ENCODE measurements at regions of chr15 and their contacts with region 1.

Region 1: DNA sequence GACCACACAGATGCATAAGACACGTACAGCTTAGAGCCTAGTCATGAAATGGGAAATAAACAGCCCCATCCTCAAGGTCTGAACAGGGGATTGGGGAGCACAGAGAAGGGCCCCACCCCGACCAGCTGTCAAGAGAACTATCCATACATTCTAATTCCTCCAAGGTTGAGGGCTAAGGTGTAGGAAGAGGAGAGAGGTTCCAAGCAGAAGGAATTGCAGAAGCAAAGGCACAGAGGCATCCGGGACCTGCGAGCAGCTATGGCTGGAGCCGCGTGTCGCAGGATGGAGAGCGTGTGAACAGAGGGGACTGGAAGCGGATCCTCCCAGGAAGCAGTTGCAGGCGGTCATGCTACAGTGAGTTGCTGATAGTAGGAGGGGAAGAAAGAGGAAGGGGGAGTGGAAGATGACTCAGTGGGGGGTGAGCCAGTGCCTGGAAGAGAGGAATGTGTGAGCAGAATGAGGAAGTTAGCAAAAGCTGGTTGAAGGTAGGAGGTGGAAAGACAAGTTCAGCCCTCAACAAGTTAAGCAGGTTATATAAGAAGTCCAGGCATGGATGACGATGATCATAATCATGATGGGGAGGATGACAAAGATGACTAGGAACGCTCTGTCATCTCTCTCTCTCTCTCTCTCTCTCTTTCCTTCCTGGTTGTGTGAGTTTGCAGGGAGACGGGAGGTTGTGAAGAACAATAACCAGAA is 89.7 kb downstream of the LIPC start:
- DNase-seq: peak in 8 of 10 donors; percentile 41 to 80 (median 64)
- H3K4me3 ChIP-seq: no peak overlapping the region
- H3K27ac ChIP-seq: peak overlapping the region; percentile 6 to 92 (median 84)
- H3K27me3 ChIP-seq: no peaks in the 10 kb centered on the region
- CTCF ChIP-seq: no peak

Region 2: GRCh38 chr15:58331903-58332675 is 189.4 kb before region 1 on chr15:
- intact Hi-C with region 1: loop called in 1 of 2 experiments (anchors 5 kb)
- DNase-seq: peak; percentile 48 to 95 (median 88)
- H3K4me3 ChIP-seq: peak overlapping the region in 35 of 59 donors; percentile 0 to 42 (median 18)
- H3K27ac ChIP-seq: peak overlapping the region; percentile 63 to 96 (median 90)
- H3K27me3 ChIP-seq: no peaks in the 10 kb centered on the region
- CTCF ChIP-seq: peak in 5 of 56 donors; percentile 11 to 29 (median 18)

Region 3: GRCh38 chr15:58407376-58407775 is 114.1 kb before region 1 on chr15:
- intact Hi-C with region 1: loop called in 1 of 2 experiments (anchors 5 kb)
- DNase-seq: peak in 5 of 10 donors; percentile 16 to 74 (median 47)
- H3K4me3 ChIP-seq: peak overlapping the region in 2 of 59 donors; percentile 3 to 11
- H3K27ac ChIP-seq: peak overlapping the region in 39 of 59 donors; percentile 2 to 80 (median 53)
- H3K27me3 ChIP-seq: no peaks in the 10 kb centered on the region
- CTCF ChIP-seq: peak in 13 of 56 donors; percentile 11 to 54 (median 23)

Region 4: DNA sequence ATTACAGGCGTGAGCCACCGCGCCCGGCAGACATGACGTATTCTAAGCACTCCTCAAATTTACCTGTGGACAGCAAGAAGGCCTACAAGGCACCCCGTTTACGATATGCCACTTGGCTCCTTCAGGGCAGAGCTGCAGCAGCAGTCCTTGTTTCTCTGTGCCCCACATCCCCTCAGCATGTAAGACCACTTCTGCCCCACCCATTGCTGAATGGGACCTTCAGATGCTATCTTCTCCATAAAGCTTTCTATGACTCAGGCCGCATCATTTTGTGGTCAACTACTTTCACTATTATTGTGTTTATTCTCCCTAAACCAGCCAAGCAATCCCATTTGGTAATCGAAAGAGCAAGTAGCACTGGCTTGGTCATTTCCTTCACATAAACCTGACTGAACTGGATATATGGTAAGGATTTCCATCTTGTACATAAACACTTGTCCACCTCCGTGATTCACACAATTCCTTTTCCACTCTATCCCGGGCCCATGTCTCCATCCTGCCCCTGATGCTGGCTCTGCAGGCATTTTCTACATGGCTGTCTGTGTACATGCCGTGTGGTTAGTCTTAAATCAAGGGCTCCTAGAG is 64.0 kb before region 1 on chr15:
- intact Hi-C with region 1: loop called in 1 of 2 experiments (anchors 10 kb)
- DNase-seq: no peak
- H3K4me3 ChIP-seq: no peak overlapping the region
- H3K27ac ChIP-seq: peak overlapping the region in 9 of 59 donors; percentile 0 to 48 (median 20)
- H3K27me3 ChIP-seq: no peaks in the 10 kb centered on the region
- CTCF ChIP-seq: no peak

Region 5: DNA sequence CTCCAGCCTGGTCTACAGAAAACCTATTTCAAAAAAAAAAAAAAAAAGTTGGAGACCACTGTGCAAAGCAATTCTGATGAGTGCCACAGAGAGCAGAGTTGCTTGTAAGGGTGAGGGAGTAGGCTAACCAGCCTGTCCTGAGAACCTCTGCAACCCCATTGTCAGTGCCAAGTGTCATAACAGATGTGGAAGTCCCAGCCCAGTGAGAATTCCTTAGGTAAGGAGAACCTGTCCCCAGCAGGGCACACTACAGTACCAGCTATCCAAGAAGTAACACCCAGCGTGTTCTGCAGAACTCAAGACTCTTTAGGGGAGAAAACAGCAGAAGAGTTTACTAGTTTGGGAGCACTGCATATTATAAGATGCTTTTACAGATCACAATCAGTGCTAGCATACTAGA is 66.7 kb after region 1 on chr15:
- intact Hi-C with region 1: no loop called
- DNase-seq: no peak
- H3K4me3 ChIP-seq: no peak overlapping the region
- H3K27ac ChIP-seq: no peak overlapping the region
- H3K27me3 ChIP-seq: no peaks in the 10 kb centered on the region
- CTCF ChIP-seq: no peak

Region 6: DNA sequence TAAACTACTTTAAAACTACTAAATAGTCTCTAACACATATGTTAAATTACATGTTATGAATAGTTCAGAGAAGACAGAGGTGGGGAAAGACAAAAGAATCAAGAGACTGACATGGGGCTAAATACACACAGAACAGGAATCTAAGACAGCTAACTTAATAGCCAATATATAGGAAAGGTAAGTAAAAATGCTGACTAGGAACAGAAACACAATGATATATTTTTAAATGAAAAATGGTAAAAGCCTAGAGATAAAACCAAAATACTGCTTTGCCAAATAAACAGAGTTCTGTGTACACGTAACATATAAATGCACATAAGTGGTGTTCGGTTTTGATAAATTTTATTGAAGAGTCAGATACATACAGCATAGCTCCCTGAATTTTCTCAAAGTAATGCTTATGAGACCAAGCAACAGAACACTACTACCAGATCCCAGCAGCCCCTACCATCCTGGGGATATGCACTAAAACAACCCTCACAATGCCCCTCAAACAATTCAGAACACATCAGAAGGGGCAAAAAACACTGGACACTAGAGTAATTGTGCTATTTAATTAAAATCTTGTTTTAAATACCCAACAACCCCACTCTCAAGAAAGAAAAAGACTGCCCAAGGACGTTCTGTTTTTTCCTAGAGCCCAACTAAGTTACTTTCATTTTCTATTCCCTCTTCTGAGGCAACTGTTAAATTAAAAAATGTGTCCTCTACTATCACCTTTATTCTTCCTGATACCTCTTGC is 106.9 kb after region 1 on chr15:
- intact Hi-C with region 1: loop called in 1 of 2 experiments (anchors 10 kb)
- DNase-seq: no peak
- H3K4me3 ChIP-seq: peak overlapping the region in 58 of 59 donors; percentile 1 to 64 (median 41)
- H3K27ac ChIP-seq: peak overlapping the region in 58 of 59 donors; percentile 2 to 88 (median 76)
- H3K27me3 ChIP-seq: no peaks in the 10 kb centered on the region
- CTCF ChIP-seq: no peak

Region 7: DNA sequence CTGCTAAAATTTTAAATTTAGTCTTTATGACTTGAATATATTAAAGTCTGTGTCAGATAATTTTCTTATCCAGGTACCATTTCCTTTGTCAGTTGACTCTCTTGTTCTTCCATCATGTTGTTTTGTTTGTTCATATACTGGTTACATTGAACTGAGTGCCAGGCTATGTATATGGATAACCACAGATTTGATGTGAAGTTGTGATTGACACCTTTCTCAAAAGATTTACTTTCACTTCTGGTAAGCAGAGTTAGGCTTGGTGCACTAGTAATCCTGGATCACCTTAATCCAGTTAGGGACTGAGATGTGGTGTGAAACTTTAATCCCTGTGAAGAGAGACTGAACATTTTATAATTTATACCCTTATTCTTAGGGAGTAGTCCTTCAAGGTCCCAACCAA is 128.7 kb after region 1 on chr15:
- intact Hi-C with region 1: loop called in 1 of 2 experiments (anchors 10 kb)
- DNase-seq: no peak
- H3K4me3 ChIP-seq: no peak overlapping the region
- H3K27ac ChIP-seq: peak overlapping the region in 1 of 59 donors; percentile 18
- H3K27me3 ChIP-seq: no peaks in the 10 kb centered on the region
- CTCF ChIP-seq: no peak